ENCODE measurements at regions of chr1 and their contacts with region 1.

Region 1: GRCh38 chr1:181166377-181167196 is 78.1 kb downstream of the IER5 start:
- DNase-seq: peak; percentile 85
- ATAC-seq: peak; percentile 100
- H3K4me3 Mint-ChIP-seq: no peak overlapping the region
- H3K27ac Mint-ChIP-seq: peak overlapping the region; percentile 35
- H3K4me1 Mint-ChIP-seq: peaks cover 5% of the 10 kb centered on the region
- H3K27me3 Mint-ChIP-seq: peaks cover 8% of the 10 kb centered on the region

Region 2: DNA sequence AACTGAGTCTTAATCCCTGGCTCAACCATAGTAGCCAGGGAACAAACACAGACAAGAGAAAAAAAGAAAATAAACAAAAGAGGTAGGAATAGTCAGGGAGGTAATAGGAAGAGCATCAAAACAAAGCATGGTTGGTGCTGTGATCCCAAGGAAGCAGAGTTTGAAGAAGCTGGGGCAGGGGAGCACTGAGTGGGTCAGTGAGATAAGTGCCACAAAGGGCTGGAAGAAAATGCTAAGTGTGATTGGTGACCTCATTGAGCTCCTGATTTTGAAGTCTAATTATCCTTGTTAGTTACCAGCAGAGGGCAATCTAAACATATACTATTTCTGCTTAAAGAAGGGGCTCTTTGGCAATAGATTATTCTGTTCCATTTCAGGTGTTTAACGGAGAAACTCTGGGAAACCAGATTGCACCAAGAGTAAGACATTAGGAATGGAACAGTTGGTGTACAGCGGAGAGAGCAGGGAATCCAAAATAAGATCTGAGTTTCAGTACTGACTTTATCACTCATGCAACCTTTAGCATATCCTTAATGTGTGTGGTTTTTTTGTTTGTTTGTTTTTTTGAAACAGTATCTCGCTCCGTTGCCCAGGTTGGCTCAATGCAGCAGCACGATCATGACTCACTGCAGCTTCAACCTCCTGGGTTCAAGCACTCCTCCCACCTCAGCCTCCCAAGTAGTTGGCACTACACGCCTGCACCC is 284.6 kb before region 1 on chr1:
- CTCF ChIA-PET with region 1: interaction called, 22 read pairs
- DNase-seq: no peak
- ATAC-seq: peak; percentile 58
- H3K4me3 Mint-ChIP-seq: no peak overlapping the region
- H3K27ac Mint-ChIP-seq: no peak overlapping the region
- H3K4me1 Mint-ChIP-seq: peaks cover 2% of the 10 kb centered on the region
- H3K27me3 Mint-ChIP-seq: no peaks in the 10 kb centered on the region

Region 3: GRCh38 chr1:181134543-181135362 is 31.8 kb before region 1 on chr1:
- CTCF ChIA-PET with region 1: no interaction called
- DNase-seq: peak; percentile 63
- ATAC-seq: peak; percentile 62
- H3K4me3 Mint-ChIP-seq: peak overlapping the region; percentile 44
- H3K27ac Mint-ChIP-seq: peak overlapping the region; percentile 90
- H3K4me1 Mint-ChIP-seq: peaks cover 71% of the 10 kb centered on the region
- H3K27me3 Mint-ChIP-seq: no peaks in the 10 kb centered on the region

Region 4: DNA sequence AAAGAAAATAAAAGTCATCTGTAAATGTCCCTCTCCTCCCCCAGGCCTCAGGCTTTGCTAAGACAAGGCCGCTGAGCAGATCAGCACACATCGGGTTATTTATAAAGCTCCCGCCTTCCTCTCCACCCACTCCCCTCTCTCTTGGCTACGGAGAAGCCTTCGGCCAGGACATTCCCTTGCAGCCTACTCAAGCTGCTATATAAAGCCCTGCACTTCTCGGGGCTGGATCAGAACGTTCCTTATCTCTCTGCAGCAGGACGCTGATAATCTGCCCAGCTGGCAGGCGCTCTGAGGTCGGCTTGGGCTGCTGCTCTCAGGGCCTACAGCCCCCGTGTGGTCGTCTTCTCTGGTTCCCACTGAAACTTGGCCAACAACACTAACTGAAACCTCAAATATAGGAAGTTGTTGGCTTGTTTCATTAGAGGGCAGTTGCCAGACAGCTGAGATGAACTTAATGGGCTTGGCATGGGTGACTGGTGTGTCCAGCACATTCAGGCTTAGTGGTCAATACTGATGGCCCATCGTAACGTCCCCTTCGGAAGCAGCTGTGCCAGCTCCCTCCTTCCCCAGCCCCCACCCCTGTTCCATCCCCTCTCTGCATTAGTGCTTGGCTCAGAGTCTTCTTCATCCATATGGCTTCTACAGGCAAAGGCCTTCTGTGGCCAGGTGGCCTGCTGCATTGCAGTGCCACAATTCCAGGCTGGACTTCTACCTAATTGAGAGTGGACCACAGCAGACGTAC is 13.5 kb before region 1 on chr1:
- CTCF ChIA-PET with region 1: interaction called, 47 read pairs
- DNase-seq: no peak
- ATAC-seq: no peak
- H3K4me3 Mint-ChIP-seq: no peak overlapping the region
- H3K27ac Mint-ChIP-seq: no peak overlapping the region
- H3K4me1 Mint-ChIP-seq: peaks cover 54% of the 10 kb centered on the region
- H3K27me3 Mint-ChIP-seq: peaks cover 23% of the 10 kb centered on the region

Measured in activated CD8-positive, alpha-beta memory T cell treated with anti-CD3 and anti-CD28 coated beads, Interleukin-2, amount 10 ng/mL, durations not matched to agents 7 days and 5 days (primary cell).